ENCODE measurements at regions of chr12 and their contacts with region 1.

Region 1: DNA sequence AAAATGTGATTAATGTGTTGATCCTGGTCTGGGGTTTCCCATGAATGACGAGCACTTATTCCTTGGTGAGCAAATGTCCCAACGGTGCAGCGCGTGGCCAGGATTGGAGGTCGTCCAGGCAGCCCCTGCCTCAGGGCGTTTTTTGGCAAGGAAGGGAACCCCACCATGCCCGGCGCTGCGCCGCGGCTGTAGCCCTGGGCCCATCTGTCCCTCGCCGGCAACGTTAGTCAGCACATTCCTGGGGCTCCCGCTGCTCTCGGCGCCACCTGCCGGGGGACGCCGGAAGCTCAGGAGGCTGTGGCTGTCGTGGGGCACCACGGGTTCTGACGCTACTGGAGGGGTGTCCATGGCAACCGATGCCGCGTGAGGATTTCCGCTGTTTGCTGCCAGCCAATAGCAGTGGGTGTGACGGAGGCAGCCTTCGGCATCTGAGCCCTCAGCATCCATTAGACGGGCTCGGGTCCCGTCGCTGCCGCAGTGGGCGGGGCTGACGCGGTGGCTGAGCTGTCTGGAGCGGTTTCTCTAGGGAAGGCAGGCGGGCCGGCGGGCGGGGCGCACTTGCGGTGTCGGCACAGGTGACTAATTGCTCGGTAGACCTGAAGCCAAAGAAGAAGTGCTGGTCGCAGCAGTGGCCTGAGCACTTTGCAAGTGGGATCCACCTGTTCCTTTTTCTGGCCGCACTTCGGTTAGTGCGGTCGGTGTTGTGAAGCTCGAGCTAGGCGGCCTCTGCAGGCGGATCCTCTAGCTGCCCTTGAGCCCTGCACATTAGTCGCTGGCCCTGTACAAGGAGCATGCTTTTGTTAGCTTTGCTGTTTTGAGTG is 29.5 kb downstream of the RAB35 start:
- DNase-seq: peak; percentile 100
- H3K4me3 Mint-ChIP-seq: peak overlapping the region; percentile 63
- H3K27ac Mint-ChIP-seq: peak overlapping the region; percentile 85
- H3K4me1 Mint-ChIP-seq: peaks cover 41% of the 10 kb centered on the region
- H3K27me3 Mint-ChIP-seq: no peaks in the 10 kb centered on the region

Region 2: DNA sequence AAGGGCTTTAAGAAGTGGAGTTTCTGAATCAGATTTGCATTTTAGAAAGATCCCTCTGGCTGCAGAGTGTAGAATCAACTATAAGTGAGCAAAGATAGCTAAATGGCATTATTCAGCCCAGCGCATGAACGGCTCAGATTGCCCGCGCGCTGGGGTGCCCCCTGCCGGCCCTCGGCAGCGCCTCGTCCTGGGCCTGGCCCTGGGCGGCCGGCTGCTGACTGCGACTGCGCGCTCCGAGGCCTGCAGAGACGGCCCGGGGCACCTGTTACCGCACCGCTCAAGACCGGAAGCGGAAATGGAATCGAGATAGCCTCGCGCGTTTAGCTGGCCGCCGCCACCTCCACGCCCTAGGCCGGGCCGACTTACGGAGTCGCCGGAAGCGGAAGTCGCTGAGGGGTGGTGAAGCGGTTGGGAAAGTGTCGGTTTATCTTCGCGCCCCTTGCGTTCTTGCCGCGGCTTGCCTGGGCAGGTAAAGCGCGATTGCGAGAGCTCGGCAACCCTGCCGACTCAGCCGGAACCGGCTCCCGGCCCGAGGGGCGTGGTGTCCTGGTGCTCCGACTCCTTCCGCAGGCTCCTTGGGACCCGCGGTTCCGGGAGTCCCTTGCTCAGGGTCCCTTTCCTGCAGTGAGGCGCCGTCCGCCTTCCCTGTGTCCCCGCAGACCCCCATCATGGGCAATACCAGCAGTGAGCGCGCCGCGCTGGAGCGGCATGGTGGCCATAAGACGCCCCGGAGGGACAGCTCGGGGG is 419.3 kb before region 1 on chr12 and contains the start of gene PRKAB1:
- CTCF ChIA-PET with region 1: no interaction called
- intact Hi-C with region 1: loop called (anchors 2 kb)
- DNase-seq: peak; percentile 96
- H3K4me3 Mint-ChIP-seq: peak within 1 kb of the TSS; percentile 90
- H3K27ac Mint-ChIP-seq: peak within 1 kb of the TSS; percentile 95
- H3K4me1 Mint-ChIP-seq: peaks cover 52% of the 10 kb centered on the region
- H3K27me3 Mint-ChIP-seq: no peaks in the 10 kb centered on the region
- total RNA-seq, gene PRKAB1: 34.3 to 39.8 TPM

Region 3: GRCh38 chr12:119885549-119885948 is 201.5 kb before region 1 on chr12:
- CTCF ChIA-PET with region 1: no interaction called
- intact Hi-C with region 1: no loop called
- DNase-seq: no peak
- H3K4me3 Mint-ChIP-seq: no peak overlapping the region
- H3K27ac Mint-ChIP-seq: no peak overlapping the region
- H3K4me1 Mint-ChIP-seq: no peaks in the 10 kb centered on the region
- H3K27me3 Mint-ChIP-seq: peaks cover 2% of the 10 kb centered on the region

Region 4: DNA sequence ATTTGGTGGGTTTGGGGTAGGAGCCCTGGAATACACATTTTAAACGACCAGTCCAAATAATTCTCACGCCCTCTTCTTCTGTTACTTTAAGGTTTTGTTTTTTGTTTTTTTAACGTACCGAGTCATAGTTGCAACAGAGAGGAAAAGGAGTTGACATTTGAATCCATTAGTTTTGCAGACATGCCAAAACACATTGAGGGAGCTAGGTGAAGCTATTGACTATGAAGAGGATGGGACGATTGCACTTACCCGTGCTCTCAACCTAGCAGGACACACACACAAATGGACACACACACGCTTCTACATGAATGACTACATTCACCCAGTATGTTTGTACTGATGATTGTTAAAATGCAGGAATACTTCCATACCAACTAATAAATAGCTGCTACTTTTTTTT is 155.6 kb before region 1 on chr12:
- CTCF ChIA-PET with region 1: no interaction called
- intact Hi-C with region 1: loop called (anchors 1 kb)
- DNase-seq: no peak
- H3K4me3 Mint-ChIP-seq: no peak overlapping the region
- H3K27ac Mint-ChIP-seq: no peak overlapping the region
- H3K4me1 Mint-ChIP-seq: no peaks in the 10 kb centered on the region
- H3K27me3 Mint-ChIP-seq: no peaks in the 10 kb centered on the region

Region 5: GRCh38 chr12:120103044-120103737 is 16.2 kb after region 1 on chr12:
- CTCF ChIA-PET with region 1: no interaction called
- intact Hi-C with region 1: no loop called
- DNase-seq: no peak
- H3K4me3 Mint-ChIP-seq: no peak overlapping the region
- H3K27ac Mint-ChIP-seq: no peak overlapping the region
- H3K4me1 Mint-ChIP-seq: peaks cover 7% of the 10 kb centered on the region
- H3K27me3 Mint-ChIP-seq: no peaks in the 10 kb centered on the region

Region 6: GRCh38 chr12:120265473-120266179 is 178.6 kb after region 1 on chr12 and contains the start of gene PXN:
- CTCF ChIA-PET with region 1: no interaction called
- intact Hi-C with region 1: loop called (anchors 1 kb)
- DNase-seq: peak; percentile 90
- H3K4me3 Mint-ChIP-seq: peak within 1 kb of the TSS; percentile 89
- H3K27ac Mint-ChIP-seq: peak within 1 kb of the TSS; percentile 87
- H3K4me1 Mint-ChIP-seq: peaks cover 44% of the 10 kb centered on the region
- H3K27me3 Mint-ChIP-seq: no peaks in the 10 kb centered on the region
- total RNA-seq, gene PXN: 109 to 112 TPM

Region 7: GRCh38 chr12:120317224-120318105 is 230.5 kb after region 1 on chr12:
- CTCF ChIA-PET with region 1: no interaction called
- intact Hi-C with region 1: loop called (anchors 1 kb)
- DNase-seq: peak; percentile 100
- H3K4me3 Mint-ChIP-seq: peak overlapping the region; percentile 87
- H3K27ac Mint-ChIP-seq: peak overlapping the region; percentile 88
- H3K4me1 Mint-ChIP-seq: peaks cover 11% of the 10 kb centered on the region
- H3K27me3 Mint-ChIP-seq: no peaks in the 10 kb centered on the region

Measured in activated naive CD4-positive, alpha-beta T cell treated with anti-CD3 and anti-CD28 coated beads for 36 hours (primary cell).